MCF 10A (cell line): ENCODE measurements at regions of chr6 and their contacts with region 1.

Region 1: DNA sequence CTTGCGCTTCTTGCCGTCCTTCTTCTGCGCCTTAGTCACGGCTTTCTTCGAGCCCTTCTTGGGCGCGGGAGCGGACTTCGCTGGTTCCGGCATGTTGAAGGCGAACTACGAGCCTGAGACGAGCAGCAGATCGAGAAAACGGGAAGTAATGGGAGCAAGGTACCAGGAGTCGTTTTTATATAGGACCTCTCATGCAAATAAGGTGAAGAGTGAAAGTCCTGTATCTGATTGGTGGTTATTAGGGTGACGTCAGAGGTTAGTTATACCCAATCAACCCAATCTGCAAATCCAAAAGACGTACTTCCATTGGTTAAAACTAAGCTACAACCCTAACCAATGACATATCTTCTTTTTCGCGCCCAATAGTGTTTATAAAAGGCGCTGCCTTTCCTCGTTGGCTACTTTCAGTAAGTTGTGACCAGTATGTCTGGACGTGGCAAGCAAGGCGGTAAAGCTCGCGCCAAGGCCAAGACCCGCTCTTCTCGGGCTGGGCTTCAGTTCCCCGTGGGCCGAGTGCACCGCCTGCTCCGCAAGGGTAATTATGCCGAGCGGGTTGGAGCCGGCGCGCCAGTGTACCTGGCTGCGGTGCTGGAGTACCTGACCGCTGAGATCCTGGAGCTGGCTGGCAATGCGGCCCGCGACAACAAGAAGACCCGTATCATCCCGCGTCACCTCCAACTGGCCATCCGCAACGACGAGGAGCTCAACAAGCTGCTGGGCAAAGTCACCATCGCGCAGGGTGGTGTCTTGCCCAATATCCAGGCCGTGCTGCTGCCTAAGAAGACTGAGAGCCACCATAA is 100.6 kb upstream of the PRSS16 start:
- DNase-seq: peak; percentile 99
- H3K4me3 Mint-ChIP-seq: no peak overlapping the region
- H3K27ac Mint-ChIP-seq: no peak overlapping the region
- H3K4me1 Mint-ChIP-seq: no peaks in the 10 kb centered on the region
- H3K27me3 Mint-ChIP-seq: no peaks in the 10 kb centered on the region
- CTCF ChIP-seq: no peak

Region 2: DNA sequence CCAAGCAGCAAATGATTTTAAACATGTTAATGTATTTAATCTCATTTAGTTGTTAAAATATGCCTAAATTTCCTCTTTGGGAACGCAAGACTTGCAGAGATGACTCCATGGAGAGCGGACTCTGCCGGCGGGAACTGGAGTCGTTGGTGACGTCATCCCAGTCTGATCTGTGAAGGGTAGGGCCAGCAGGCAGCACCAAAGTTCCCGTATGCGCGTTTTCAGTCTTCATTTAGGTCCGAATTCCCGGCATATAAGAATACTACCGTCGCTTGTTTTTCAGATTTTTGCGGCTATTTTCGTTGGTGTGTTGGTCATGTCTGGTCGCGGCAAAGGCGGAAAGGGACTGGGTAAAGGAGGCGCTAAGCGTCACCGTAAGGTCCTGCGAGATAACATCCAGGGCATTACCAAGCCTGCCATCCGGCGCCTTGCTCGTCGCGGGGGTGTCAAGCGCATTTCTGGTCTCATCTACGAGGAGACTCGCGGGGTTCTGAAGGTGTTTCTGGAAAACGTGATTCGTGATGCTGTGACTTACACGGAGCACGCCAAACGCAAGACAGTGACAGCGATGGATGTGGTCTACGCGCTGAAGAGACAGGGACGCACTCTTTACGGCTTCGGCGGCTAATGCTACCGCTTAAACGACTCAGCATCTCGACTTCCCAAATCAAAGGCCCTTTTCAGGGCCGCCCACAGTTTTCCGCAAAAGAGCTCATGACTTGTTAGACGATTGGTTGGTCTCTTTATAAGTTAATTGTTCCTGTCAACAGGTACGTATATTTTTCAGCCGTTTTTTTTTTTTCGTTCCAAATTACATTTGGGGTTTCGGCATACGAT is 942.4 kb before region 1 on chr6:
- CTCF ChIA-PET with region 1: no interaction called
- POLR2A ChIA-PET with region 1: interaction called, 77 read pairs
- intact Hi-C with region 1: loop called (anchors 5 kb)
- DNase-seq: peak; percentile 98
- H3K4me3 Mint-ChIP-seq: no peak overlapping the region
- H3K27ac Mint-ChIP-seq: no peak overlapping the region
- H3K4me1 Mint-ChIP-seq: peaks cover 3% of the 10 kb centered on the region
- H3K27me3 Mint-ChIP-seq: no peaks in the 10 kb centered on the region
- CTCF ChIP-seq: no peak

Region 3: GRCh38 chr6:26473758-26474438 is 673.0 kb before region 1 on chr6:
- CTCF ChIA-PET with region 1: no interaction called
- POLR2A ChIA-PET with region 1: no interaction called
- intact Hi-C with region 1: no loop called
- DNase-seq: peak; percentile 94
- H3K4me3 Mint-ChIP-seq: peak overlapping the region; percentile 92
- H3K27ac Mint-ChIP-seq: peak overlapping the region; percentile 99
- H3K4me1 Mint-ChIP-seq: peaks cover 21% of the 10 kb centered on the region
- H3K27me3 Mint-ChIP-seq: no peaks in the 10 kb centered on the region
- CTCF ChIP-seq: no peak

Region 4: GRCh38 chr6:27111743-27112142 is 35.2 kb before region 1 on chr6:
- CTCF ChIA-PET with region 1: no interaction called
- POLR2A ChIA-PET with region 1: no interaction called
- intact Hi-C with region 1: no loop called
- DNase-seq: peak; percentile 17
- H3K4me3 Mint-ChIP-seq: no peak overlapping the region
- H3K27ac Mint-ChIP-seq: no peak overlapping the region
- H3K4me1 Mint-ChIP-seq: no peaks in the 10 kb centered on the region
- H3K27me3 Mint-ChIP-seq: no peaks in the 10 kb centered on the region
- CTCF ChIP-seq: no peak

Region 5: DNA sequence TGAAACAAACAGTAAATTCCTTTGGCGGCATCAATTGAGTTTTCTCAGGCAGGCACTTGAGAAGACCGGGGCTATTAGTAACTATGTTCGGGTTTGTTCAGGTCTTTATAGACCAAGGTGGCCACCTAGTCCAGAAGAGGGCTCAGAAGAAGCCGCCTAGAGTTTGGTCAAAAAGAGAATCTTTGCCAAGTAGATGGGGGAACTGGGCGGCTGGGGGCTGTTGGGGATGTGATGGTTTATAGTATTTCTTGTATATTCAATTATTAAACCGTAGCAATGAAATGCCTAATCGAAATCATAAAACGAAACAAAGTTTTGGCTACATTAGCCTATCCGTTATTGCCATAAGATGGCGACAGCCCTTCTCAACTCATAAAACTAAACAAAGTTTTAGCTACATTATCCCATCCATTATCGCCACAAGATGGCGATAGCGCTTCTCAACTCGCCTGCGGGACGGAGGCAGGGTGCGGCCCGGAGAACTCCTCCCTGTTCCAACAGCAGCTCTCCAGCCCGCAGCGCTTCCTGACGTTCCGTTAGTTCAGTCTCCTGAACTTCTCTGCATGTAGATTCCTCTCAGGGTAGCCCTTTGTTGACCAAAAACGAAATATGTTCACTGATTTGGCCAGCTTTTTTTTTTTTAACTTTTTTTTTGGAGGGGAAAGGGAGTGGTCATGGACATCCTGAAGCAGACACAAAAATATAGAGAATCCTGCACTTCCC is 19.9 kb before region 1 on chr6:
- CTCF ChIA-PET with region 1: interaction called, 12 read pairs
- POLR2A ChIA-PET with region 1: interaction called, 621 read pairs
- intact Hi-C with region 1: loop called (anchors 1 kb)
- DNase-seq: peak; percentile 91
- H3K4me3 Mint-ChIP-seq: peak overlapping the region; percentile 71
- H3K27ac Mint-ChIP-seq: peak overlapping the region; percentile 54
- H3K4me1 Mint-ChIP-seq: peaks cover 7% of the 10 kb centered on the region
- H3K27me3 Mint-ChIP-seq: no peaks in the 10 kb centered on the region
- CTCF ChIP-seq: peak; percentile 66

Region 6: DNA sequence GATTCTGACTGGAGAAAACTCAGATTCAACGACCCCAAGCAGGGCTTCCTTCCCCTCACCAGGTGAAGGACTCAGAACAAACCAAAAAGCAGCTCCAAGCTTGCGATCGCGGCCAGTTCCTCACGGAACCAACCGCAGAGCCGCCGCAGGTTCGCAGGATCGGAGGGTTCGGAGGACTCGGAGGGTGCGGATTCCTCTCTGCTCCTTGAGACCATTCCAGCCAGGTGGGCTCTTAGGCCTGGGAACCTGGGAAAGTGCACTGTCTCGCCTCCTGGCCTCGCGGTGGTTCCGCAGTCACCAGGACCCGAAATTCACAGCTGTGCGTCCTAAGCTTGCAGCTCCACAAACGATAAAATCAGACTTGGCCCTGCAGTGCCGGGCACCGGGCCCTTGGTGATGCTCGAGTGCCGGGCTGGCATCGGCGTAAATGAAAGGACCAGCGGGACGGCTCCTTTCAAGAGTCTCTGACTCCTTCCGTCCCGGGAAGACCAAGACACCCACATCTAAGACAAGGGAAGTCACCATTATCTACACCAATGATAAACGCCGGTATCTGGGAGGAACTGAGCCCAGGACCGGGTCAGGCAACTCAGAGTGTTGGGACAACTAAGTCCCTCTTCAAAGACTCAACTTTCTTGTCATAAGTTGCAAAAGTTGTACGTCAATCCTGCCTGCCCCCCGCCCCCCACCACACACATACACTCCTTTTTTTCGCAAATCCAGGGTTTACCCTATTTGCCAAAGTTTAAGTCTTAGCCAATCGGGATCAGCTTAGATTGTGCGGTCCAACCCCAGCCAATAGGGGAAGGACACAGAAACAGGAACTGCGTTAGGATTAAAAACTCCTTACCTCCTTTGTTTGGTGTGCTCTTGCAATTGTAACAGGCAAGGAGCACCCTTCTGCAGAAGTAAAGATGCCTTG is 30.8 kb after region 1 on chr6:
- CTCF ChIA-PET with region 1: interaction called, 3 read pairs
- POLR2A ChIA-PET with region 1: interaction called, 30 read pairs
- intact Hi-C with region 1: no loop called
- DNase-seq: peak; percentile 92
- H3K4me3 Mint-ChIP-seq: peak overlapping the region; percentile 87
- H3K27ac Mint-ChIP-seq: peak overlapping the region; percentile 92
- H3K4me1 Mint-ChIP-seq: no peaks in the 10 kb centered on the region
- H3K27me3 Mint-ChIP-seq: no peaks in the 10 kb centered on the region
- CTCF ChIP-seq: peak; percentile 36

Region 7: DNA sequence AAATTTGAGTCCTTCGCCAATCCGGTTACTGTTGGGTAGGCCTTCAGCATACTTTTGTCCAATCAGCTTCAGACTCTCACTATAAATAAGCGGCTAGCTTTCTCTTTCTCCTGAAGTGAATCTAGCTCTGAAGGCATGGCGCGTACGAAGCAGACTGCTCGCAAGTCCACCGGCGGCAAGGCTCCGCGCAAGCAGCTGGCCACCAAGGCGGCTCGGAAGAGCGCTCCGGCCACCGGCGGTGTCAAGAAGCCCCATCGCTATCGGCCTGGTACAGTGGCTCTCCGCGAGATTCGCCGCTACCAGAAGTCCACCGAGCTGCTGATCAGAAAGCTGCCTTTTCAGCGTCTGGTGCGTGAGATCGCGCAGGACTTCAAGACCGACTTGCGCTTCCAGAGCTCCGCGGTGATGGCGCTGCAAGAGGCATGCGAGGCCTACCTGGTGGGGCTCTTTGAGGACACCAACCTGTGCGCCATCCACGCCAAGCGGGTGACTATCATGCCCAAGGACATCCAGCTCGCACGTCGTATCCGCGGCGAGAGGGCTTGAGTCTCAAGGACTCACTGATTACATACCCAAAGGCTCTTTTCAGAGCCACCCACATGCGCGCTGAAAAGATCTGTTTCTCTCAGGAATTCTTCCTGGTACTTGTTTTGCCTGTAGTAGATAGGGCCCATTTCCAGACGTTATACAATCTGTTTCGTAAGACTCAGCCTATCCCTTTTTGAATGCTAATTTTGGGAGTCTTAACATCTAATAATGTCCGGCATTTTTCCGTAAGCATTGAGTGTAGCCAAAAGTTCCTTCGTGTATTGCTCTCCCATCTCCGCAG is 663.2 kb after region 1 on chr6:
- CTCF ChIA-PET with region 1: no interaction called
- POLR2A ChIA-PET with region 1: interaction called, 212 read pairs
- intact Hi-C with region 1: no loop called
- DNase-seq: peak; percentile 96
- H3K4me3 Mint-ChIP-seq: peak overlapping the region; percentile 86
- H3K27ac Mint-ChIP-seq: peak overlapping the region; percentile 94
- H3K4me1 Mint-ChIP-seq: peaks cover 20% of the 10 kb centered on the region
- H3K27me3 Mint-ChIP-seq: no peaks in the 10 kb centered on the region
- CTCF ChIP-seq: no peak

Region 8: DNA sequence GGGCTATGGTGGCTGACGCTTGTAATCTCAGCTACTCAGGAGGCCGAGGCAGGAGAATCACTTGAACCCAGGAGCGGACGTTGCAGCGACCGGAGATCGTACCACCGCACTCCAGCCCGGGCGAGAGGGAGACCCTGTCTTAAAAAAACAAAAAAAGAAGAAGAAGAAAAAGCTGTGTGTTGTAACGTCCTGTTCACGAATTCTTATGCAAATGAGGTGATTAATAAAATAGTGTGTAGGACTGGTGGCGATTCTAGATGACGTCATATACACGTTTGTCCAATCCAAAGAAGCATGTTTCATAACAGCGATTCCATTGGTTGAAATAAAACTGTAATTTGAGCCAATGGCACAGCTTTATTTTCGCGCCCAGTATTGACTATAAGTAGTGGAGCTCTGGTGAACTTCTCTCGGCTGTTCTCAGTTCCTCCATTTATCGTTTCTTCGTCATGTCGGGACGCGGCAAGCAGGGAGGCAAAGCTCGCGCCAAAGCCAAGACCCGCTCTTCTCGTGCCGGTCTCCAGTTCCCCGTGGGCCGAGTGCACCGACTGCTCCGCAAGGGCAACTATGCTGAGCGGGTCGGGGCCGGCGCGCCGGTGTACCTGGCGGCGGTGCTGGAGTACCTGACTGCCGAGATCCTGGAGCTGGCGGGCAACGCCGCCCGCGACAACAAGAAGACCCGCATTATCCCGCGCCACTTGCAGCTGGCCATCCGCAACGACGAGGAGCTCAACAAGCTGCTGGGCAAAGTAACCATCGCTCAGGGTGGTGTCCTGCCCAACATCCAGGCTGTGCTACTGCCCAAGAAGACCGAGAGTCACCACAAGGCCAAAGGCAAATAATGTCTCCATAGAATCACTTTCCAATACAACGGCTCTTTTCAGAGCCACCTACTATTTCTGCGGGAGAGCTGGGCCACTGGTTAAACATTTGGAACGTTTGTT is 718.3 kb after region 1 on chr6:
- CTCF ChIA-PET with region 1: no interaction called
- POLR2A ChIA-PET with region 1: interaction called, 50 read pairs
- intact Hi-C with region 1: no loop called
- DNase-seq: peak; percentile 96
- H3K4me3 Mint-ChIP-seq: peak overlapping the region; percentile 91
- H3K27ac Mint-ChIP-seq: peak overlapping the region; percentile 97
- H3K4me1 Mint-ChIP-seq: no peaks in the 10 kb centered on the region
- H3K27me3 Mint-ChIP-seq: no peaks in the 10 kb centered on the region
- CTCF ChIP-seq: no peak